ENCODE measurements at regions of chr11 and their contacts with region 1.

Region 1: DNA sequence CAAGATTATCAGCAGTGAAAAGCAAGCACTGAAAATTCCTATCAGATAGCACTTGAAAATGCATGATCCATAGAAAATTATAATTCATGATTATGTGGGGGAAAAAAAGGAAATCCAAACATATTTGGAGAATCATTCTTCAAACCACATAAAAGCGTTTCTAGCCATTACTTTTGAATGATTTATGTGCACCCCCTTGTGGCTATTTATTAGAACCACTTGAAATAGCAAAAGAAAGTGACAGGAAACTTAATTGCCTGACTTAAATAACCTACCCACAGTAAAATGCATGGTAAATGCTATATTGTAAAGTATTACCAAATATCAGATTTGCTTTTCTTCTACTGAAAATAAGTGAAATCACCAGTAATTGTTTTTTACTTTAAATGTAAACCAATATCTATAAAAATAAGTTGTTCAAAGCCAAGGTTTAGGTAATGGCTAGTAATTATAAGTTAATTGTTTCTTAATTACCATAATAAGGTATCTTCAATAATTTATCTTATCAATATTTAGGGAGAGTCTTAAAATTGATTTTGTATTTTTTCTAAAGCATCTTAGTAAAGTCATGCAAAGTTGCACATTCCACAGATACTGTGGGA is 168.5 kb downstream of the ARHGAP42 start:
- DNase-seq: no peak
- H3K4me3 ChIP-seq: no peak overlapping the region
- H3K27ac ChIP-seq: no peak overlapping the region
- H3K27me3 ChIP-seq: no peaks in the 10 kb centered on the region
- CTCF ChIP-seq: peak; percentile 60 to 91 (median 76)

Region 2: GRCh38 chr11:100681064-100681502 is 174.5 kb before region 1 on chr11:
- intact Hi-C with region 1: loop called (anchors 5 to 10 kb)
- DNase-seq: no peak
- H3K4me3 ChIP-seq: no peak overlapping the region
- H3K27ac ChIP-seq: peak overlapping the region in 2 of 59 donors; percentile 27 to 31
- H3K27me3 ChIP-seq: no peaks in the 10 kb centered on the region
- CTCF ChIP-seq: no peak

Region 3: GRCh38 chr11:100956351-100956750 is 100.8 kb after region 1 on chr11:
- intact Hi-C with region 1: no loop called
- DNase-seq: no peak
- H3K4me3 ChIP-seq: no peak overlapping the region
- H3K27ac ChIP-seq: no peak overlapping the region
- H3K27me3 ChIP-seq: no peaks in the 10 kb centered on the region
- CTCF ChIP-seq: no peak

Measured in dorsolateral prefrontal cortex (tissue), 120 donors.